Activated CD4-positive, alpha-beta memory T cell treated with anti-CD3 and anti-CD28 coated beads for 36 hours (primary cell): ENCODE measurements at regions of chr2 and their contacts with region 1.

Region 1: GRCh38 chr2:7044261-7045250 is 127.3 kb downstream of the RNF144A start:
- DNase-seq: peak; percentile 71
- H3K4me3 Mint-ChIP-seq: no peak overlapping the region
- H3K27ac Mint-ChIP-seq: no peak overlapping the region
- H3K4me1 Mint-ChIP-seq: peaks cover 2% of the 10 kb centered on the region
- H3K27me3 Mint-ChIP-seq: no peaks in the 10 kb centered on the region

Region 2: DNA sequence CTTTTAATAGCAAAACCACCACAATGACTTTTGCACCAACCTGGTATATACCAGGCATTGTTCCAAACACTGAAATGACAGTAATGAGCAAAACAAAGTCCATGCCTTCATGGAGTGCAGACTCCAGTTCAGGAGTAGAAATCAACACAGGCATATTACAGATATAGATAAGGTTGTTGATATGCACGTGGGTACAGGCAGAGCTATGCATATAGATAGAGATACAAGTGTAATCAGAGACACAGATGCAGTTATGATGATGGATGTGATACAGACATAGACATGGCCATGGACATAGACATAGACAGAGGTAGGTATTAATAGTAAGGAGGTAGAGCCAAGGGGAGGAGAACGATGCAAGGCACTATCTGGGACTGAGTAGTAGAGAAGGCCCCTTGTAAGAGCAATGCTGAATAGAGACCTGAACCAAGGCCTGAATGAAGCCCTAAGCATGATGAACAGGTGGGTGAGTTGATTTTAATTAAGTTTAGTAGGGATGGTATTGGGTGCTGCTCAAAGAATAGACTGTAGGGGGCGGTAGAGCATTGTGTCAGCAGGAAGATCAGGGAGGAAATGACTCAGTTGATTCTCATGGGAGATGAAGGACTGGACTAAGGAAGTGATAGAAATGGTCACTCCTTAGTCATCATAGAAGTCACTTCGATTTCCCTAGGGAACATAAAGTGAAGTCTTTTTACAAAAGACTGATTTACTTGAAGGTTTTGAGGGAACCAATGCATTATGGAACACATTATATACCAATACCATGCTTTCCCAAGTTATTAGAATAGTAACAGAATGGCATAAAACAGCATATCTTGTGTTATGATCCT is 218.3 kb before region 1 on chr2:
- CTCF ChIA-PET with region 1: interaction called, 41 read pairs
- POLR2A ChIA-PET with region 1: no interaction called
- intact Hi-C with region 1: loop called (anchors 1 kb)
- DNase-seq: peak; percentile 73
- H3K4me3 Mint-ChIP-seq: no peak overlapping the region
- H3K27ac Mint-ChIP-seq: no peak overlapping the region
- H3K4me1 Mint-ChIP-seq: peaks cover 7% of the 10 kb centered on the region
- H3K27me3 Mint-ChIP-seq: no peaks in the 10 kb centered on the region

Region 3: DNA sequence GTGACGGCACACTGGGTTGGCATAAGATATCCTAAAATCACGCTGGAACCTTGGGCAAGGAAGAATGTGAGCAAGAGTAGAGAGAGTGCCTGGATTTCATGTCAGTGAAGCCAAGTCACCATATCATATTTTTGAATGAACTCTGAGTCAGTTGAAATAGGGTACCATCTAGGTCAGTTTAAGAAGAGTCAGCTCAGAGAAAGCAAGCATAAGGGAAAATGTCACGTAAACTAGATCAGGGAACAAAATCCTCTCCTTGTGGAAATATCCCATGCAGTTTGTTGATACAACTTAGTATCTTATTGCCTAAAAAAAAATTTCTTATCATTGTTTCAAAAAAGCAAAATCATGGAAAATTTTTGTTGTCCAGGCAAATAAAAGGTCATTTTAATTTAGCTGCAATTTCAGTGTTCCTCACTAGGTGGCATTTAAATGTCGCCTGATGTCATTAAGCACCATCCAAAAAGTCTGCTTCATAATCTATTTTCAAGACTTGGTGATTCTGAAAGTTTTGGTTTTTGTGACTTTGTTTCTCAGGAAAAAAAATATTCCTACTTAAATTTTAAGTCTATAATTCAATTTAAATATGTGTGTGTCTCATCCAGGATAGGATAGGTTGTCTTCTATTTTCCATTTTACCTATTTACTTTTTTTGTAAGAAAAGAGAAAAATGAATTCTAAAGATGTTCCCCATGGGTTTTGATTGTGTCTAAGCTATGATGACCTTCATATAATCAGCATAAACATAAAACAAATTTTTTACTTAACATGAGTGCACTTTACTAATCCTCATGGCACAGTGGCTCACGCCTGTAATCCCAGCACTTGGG is 147.4 kb before region 1 on chr2:
- CTCF ChIA-PET with region 1: interaction called, 109 read pairs
- POLR2A ChIA-PET with region 1: interaction called, 3 read pairs
- intact Hi-C with region 1: loop called (anchors 1 kb)
- DNase-seq: no peak
- H3K4me3 Mint-ChIP-seq: no peak overlapping the region
- H3K27ac Mint-ChIP-seq: no peak overlapping the region
- H3K4me1 Mint-ChIP-seq: peaks cover 11% of the 10 kb centered on the region
- H3K27me3 Mint-ChIP-seq: no peaks in the 10 kb centered on the region

Region 4: DNA sequence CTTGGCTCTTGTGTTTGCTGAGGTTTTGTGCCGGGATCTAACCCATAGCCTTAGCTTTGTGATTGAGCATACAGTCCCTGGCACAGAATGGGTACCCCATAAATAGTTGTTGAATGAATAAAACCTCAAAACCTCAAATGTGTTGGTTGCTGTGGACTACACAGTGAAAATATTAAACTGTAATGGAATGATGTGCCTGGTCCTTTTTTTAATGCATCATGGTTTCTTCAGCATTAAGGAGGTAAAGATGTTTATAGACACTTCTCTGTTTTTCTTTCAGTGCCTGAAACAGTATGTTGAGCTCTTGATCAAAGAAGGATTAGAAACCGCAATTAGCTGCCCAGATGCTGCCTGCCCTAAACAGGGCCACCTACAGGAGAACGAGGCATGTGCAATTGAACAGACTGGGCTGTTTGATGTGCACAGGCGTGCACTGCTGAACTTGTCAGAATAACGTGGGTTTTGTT is 30.3 kb before region 1 on chr2:
- CTCF ChIA-PET with region 1: interaction called, 15 read pairs
- POLR2A ChIA-PET with region 1: no interaction called
- intact Hi-C with region 1: no loop called
- DNase-seq: peak; percentile 29
- H3K4me3 Mint-ChIP-seq: no peak overlapping the region
- H3K27ac Mint-ChIP-seq: no peak overlapping the region
- H3K4me1 Mint-ChIP-seq: peaks cover 36% of the 10 kb centered on the region
- H3K27me3 Mint-ChIP-seq: no peaks in the 10 kb centered on the region

Region 5: DNA sequence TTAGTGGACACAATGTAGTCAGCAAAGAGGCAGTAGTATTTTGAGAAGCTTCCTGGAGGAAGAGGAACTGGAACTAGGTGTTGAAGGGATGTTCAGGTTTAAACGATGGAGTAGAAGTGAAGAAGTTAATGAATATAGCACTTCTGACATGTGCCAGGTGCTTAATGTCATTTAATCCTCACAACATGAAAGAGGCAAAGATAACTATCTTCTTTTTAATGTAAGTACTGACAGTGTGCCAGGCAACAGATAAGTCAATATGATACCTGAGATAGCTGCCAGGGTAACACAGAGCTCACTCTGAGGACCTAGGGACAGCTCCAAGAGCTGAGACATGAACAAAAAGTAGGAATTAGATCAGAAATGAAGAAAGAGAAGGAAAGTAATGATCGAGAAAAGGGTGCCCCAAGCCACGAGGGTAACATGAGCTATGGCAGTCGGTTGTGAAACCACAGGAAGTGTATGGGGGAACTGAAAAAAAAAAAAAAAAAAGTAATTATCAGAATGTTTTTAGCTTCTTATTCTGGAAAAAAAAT is 13.4 kb after region 1 on chr2:
- CTCF ChIA-PET with region 1: interaction called, 34 read pairs
- POLR2A ChIA-PET with region 1: no interaction called
- intact Hi-C with region 1: no loop called
- DNase-seq: no peak
- H3K4me3 Mint-ChIP-seq: no peak overlapping the region
- H3K27ac Mint-ChIP-seq: peak overlapping the region; percentile 46
- H3K4me1 Mint-ChIP-seq: peaks cover 15% of the 10 kb centered on the region
- H3K27me3 Mint-ChIP-seq: no peaks in the 10 kb centered on the region

Region 6: GRCh38 chr2:8219631-8220355 is 1175.2 kb after region 1 on chr2:
- CTCF ChIA-PET with region 1: no interaction called
- POLR2A ChIA-PET with region 1: no interaction called
- intact Hi-C with region 1: no loop called
- DNase-seq: no peak
- H3K4me3 Mint-ChIP-seq: no peak overlapping the region
- H3K27ac Mint-ChIP-seq: no peak overlapping the region
- H3K4me1 Mint-ChIP-seq: no peaks in the 10 kb centered on the region
- H3K27me3 Mint-ChIP-seq: no peaks in the 10 kb centered on the region